ENCODE measurements at regions of chr1 and their contacts with region 1.

Region 1: GRCh38 chr1:101025657-101026504 is at the start of gene DPH5:
- DNase-seq: peak; percentile 77 to 91 (median 84)
- ATAC-seq: peak; percentile 94
- H3K4me3 ChIP-seq: peak within 1 kb of the TSS; percentile 77
- H3K4me3 Mint-ChIP-seq: peak within 1 kb of the TSS; percentile 97
- H3K27ac ChIP-seq: peak within 1 kb of the TSS; percentile 63 to 75
- H3K27ac Mint-ChIP-seq: peak within 1 kb of the TSS; percentile 98
- H3K4me1 ChIP-seq: peaks cover 19% of the 10 kb centered on the region
- H3K4me1 Mint-ChIP-seq: peaks cover 91% of the 10 kb centered on the region
- H3K27me3 ChIP-seq: no peaks in the 10 kb centered on the region
- H3K27me3 Mint-ChIP-seq: no peaks in the 10 kb centered on the region
- CTCF ChIP-seq: no peak
- total RNA-seq, gene DPH5: 31.3 to 35.4 TPM

Region 2: GRCh38 chr1:100982792-100983191 is 43.1 kb before region 1 on chr1:
- CTCF ChIA-PET with region 1: no interaction called
- POLR2A ChIA-PET with region 1: no interaction called
- intact Hi-C with region 1: no loop called
- DNase-seq: no peak
- ATAC-seq: no peak
- H3K4me3 ChIP-seq: no peak overlapping the region
- H3K4me3 Mint-ChIP-seq: no peak overlapping the region
- H3K27ac ChIP-seq: no peak overlapping the region
- H3K27ac Mint-ChIP-seq: no peak overlapping the region
- H3K4me1 ChIP-seq: no peaks in the 10 kb centered on the region
- H3K4me1 Mint-ChIP-seq: peaks cover 41% of the 10 kb centered on the region
- H3K27me3 ChIP-seq: no peaks in the 10 kb centered on the region
- H3K27me3 Mint-ChIP-seq: no peaks in the 10 kb centered on the region
- CTCF ChIP-seq: no peak

Region 3: GRCh38 chr1:101079341-101079740 is 53.5 kb after region 1 on chr1:
- CTCF ChIA-PET with region 1: no interaction called
- POLR2A ChIA-PET with region 1: no interaction called
- intact Hi-C with region 1: loop called in 1 of 2 experiments (anchors 5 kb)
- DNase-seq: no peak
- ATAC-seq: no peak
- H3K4me3 ChIP-seq: no peak overlapping the region
- H3K4me3 Mint-ChIP-seq: no peak overlapping the region
- H3K27ac ChIP-seq: no peak overlapping the region
- H3K27ac Mint-ChIP-seq: peak overlapping the region; percentile 15
- H3K4me1 ChIP-seq: peaks cover 12% of the 10 kb centered on the region
- H3K4me1 Mint-ChIP-seq: peaks cover 52% of the 10 kb centered on the region
- H3K27me3 ChIP-seq: no peaks in the 10 kb centered on the region
- H3K27me3 Mint-ChIP-seq: no peaks in the 10 kb centered on the region
- CTCF ChIP-seq: no peak

Region 4: GRCh38 chr1:101100674-101101073 is 74.8 kb after region 1 on chr1:
- CTCF ChIA-PET with region 1: no interaction called
- POLR2A ChIA-PET with region 1: no interaction called
- intact Hi-C with region 1: no loop called
- DNase-seq: no peak
- ATAC-seq: no peak
- H3K4me3 ChIP-seq: no peak overlapping the region
- H3K4me3 Mint-ChIP-seq: no peak overlapping the region
- H3K27ac ChIP-seq: no peak overlapping the region
- H3K27ac Mint-ChIP-seq: no peak overlapping the region
- H3K4me1 ChIP-seq: no peaks in the 10 kb centered on the region
- H3K4me1 Mint-ChIP-seq: peaks cover under 1% of the 10 kb centered on the region
- H3K27me3 ChIP-seq: no peaks in the 10 kb centered on the region
- H3K27me3 Mint-ChIP-seq: no peaks in the 10 kb centered on the region
- CTCF ChIP-seq: no peak